ENCODE measurements at regions of chr6 and their contacts with region 1.

Region 1: GRCh38 chr6:15456503-15456902 is 206.3 kb downstream of the DTNBP1 start:
- DNase-seq: no peak
- H3K4me3 ChIP-seq: no peak overlapping the region
- H3K27ac ChIP-seq: no peak overlapping the region
- H3K4me1 ChIP-seq: peaks cover 12% of the 10 kb centered on the region
- CTCF ChIP-seq: no peak

Region 2: DNA sequence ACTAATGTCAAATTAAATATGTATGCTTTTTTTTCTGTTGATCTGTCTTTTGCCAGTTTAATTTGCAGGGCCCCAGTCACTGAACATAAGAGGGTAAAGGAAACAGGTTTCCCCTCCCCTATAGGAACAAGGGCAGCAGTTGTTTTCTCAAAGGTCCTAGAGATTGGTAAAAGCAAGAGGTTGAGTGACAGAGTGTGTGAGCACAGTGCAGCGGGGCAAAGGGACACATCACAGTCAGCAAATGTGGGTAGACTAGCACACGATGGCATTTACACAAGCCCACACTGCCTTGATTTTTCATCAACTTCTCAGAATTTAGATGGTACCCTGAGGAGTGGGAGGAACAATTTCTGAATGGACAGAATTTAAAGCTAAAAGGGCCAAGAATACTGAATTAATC is 533.7 kb after region 1 on chr6:
- CTCF ChIA-PET with region 1: no interaction called
- POLR2A ChIA-PET with region 1: interaction called, 10 read pairs
- intact Hi-C with region 1: no loop called
- DNase-seq: no peak
- H3K4me3 ChIP-seq: no peak overlapping the region
- H3K27ac ChIP-seq: no peak overlapping the region
- H3K4me1 ChIP-seq: no peaks in the 10 kb centered on the region
- CTCF ChIP-seq: no peak